Colonic mucosa (tissue), 4 donors: ENCODE measurements at regions of chr17 and their contacts with region 1.

Region 1: DNA sequence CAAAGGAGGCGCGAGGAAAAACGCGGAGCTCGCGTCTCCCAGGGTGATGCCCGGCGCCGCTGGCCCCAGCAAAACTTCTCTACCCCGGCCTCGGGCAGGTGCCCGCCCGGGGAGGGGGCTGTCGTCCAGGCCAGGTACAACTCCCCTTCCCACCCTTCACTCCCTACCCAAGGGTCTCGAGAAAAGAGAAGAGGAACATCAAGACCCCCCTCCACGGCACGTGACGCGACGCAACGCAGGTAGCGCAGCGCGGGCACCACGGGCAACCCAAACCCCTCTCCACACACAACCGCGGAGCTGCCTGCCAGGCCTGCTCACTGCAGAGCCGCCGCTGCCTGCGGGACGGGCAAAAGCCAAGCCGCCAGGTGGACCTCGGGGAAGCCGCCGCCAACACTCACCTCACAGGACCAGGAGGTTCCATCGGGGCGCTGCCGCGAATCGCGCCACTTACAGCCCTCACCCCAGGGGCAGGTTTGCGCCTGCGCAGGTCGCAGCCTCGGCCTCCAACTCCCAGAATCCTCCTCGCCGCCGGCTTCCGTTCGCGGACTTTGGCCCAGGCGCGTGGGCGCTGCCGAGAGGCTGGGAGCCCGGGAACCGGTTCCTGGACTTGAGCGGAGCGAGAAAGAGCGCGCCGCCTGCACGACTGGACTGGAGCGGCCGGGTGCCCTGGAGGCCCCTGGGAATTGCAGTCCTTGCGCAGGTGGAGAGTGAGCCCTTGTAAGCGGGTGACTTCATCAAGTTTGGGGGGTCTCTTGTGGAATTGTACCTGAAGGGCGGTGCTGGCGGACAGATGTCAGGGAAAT is at the start of gene ZNF232:
- DNase-seq: peak; percentile 96
- H3K4me3 ChIP-seq: peak within 1 kb of the TSS; percentile 63
- H3K27ac ChIP-seq: peak within 1 kb of the TSS; percentile 60
- H3K4me1 ChIP-seq: no peaks in the 10 kb centered on the region
- H3K27me3 ChIP-seq: peaks cover 10% of the 10 kb centered on the region
- CTCF ChIP-seq: no peak
- total RNA-seq, gene ZNF232: 8.0 to 10.9 TPM

Region 2: GRCh38 chr17:5078106-5079028 is 33.2 kb before region 1 on chr17 and contains the start of gene ZFP3:
- intact Hi-C with region 1: loop called (anchors 5 kb)
- DNase-seq: peak; percentile 88
- H3K4me3 ChIP-seq: peak within 1 kb of the TSS; percentile 72
- H3K27ac ChIP-seq: peak within 1 kb of the TSS; percentile 60
- H3K4me1 ChIP-seq: no peaks in the 10 kb centered on the region
- H3K27me3 ChIP-seq: no peaks in the 10 kb centered on the region
- CTCF ChIP-seq: no peak
- total RNA-seq, gene ZFP3: 6.2 to 6.3 TPM

Region 3: GRCh38 chr17:5191541-5192417 is 80.2 kb after region 1 on chr17 and contains the start of gene ZNF594:
- intact Hi-C with region 1: loop called (anchors 5 kb)
- DNase-seq: peak; percentile 97
- H3K4me3 ChIP-seq: peak within 1 kb of the TSS; percentile 89
- H3K27ac ChIP-seq: peak within 1 kb of the TSS; percentile 66
- H3K4me1 ChIP-seq: no peaks in the 10 kb centered on the region
- H3K27me3 ChIP-seq: no peaks in the 10 kb centered on the region
- CTCF ChIP-seq: peak; percentile 64
- total RNA-seq, gene ZNF594: 3.7 to 4.0 TPM